ENCODE measurements at regions of chr1 and their contacts with region 1.

Region 1: GRCh38 chr1:161132410-161133219 is at the start of gene DEDD:
- DNase-seq: peak; percentile 89
- H3K4me3 Mint-ChIP-seq: no peak within 1 kb of the TSS
- H3K27ac Mint-ChIP-seq: no peak within 1 kb of the TSS
- H3K4me1 Mint-ChIP-seq: peaks cover 35% of the 10 kb centered on the region
- H3K27me3 Mint-ChIP-seq: no peaks in the 10 kb centered on the region
- total RNA-seq, gene DEDD: 37.5 and 40.3 TPM in 2 replicates

Region 2: DNA sequence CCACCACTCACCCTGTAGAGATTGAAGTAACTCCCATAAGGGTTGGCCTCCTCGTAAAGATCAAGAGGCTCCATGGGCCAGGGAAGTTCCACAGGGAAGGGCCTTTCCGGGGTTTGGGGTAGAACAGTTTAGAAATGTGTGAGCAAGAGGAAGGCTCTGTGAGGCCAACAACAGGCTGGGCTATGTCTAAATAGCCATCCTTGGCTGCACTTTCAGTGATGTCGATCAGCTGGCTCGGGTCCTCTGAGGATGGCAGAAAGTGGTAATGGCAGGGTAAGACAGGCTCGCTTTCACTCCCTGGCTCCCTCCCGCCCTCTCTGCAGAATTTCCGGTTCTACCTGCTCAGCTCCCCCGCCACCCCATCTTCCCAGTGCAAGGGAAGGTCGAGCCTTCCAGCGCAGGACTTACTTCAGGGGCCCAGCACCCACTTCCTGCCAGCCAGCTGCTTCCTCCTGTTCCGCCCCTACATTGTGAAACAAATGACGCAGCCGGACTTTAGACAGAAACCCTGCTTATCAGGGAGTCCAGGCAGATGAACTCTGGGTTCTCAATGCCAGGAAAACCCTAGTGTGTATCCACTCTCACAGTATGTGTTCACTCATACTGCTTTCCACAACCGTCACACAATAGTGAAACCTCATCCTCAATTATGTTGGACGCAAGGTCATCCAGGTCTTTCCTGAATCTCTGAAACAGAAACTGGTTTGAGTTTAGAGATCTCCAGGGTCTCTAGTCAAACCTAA is 119.0 kb before region 1 on chr1:
- intact Hi-C with region 1: loop called (anchors 5 kb)
- DNase-seq: peak; percentile 62
- H3K4me3 Mint-ChIP-seq: peak overlapping the region; percentile 74
- H3K27ac Mint-ChIP-seq: peak overlapping the region; percentile 96
- H3K4me1 Mint-ChIP-seq: peaks cover 37% of the 10 kb centered on the region
- H3K27me3 Mint-ChIP-seq: no peaks in the 10 kb centered on the region

Region 3: DNA sequence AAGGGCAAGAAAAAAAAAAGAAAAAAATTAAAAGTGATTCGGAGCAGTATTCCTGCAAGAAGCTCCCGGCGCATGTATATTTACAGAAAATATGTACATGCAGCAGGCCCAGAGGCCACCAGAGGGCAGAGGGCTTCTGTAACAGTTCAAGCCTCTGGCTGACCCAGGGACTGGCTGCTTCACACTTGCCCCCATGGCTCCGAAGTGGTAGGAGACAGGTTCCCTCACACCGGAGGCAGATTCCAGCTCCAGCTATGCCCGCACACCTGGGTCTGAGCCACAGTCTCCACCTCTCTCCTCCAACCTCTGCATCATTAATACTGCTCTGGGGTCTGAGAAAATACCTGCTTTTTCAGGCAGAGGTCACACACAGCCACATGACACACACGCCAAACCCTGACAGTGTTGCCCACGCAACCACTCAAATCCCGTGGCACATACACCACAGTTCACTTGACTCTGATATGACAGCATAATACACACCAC is 60.7 kb before region 1 on chr1:
- intact Hi-C with region 1: loop called (anchors 5 kb)
- DNase-seq: no peak
- H3K4me3 Mint-ChIP-seq: no peak overlapping the region
- H3K27ac Mint-ChIP-seq: no peak overlapping the region
- H3K4me1 Mint-ChIP-seq: peaks cover 29% of the 10 kb centered on the region
- H3K27me3 Mint-ChIP-seq: no peaks in the 10 kb centered on the region

Region 4: DNA sequence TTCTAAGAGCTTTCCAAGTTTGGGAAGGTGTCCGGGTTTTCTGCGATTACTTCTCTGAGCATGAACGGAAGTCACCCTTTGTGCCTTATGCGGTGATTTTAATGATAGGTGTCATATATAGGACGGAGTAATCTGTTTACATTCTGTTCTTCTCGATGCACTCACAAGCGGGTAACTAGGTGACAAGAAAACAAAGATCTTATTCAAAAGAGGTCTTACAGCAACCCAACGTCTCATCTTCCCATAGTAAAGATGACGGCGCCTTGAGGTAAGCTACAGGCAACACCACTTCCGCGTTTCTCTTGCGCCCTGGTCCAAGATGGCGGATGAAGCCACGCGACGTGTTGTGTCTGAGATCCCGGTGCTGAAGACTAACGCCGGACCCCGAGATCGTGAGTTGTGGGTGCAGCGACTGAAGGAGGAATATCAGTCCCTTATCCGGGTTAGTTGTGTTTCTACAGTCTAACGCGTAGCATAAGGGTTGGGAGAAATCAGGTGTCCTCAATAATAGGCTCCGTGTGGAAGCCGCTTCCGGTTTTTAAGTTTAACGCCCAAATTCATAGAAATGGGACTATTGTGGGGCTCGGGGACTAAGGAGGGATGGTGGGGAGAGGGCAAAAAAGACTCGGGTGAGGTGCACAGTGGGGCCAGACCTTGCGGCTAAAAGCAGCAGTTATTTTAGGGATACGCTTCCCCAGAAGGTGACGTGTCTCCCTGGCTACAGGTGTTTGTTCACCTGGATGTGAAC is 21.2 kb after region 1 on chr1 and contains the start of gene UFC1:
- intact Hi-C with region 1: loop called (anchors 1 kb)
- DNase-seq: peak; percentile 82
- H3K4me3 Mint-ChIP-seq: peak within 1 kb of the TSS; percentile 100
- H3K27ac Mint-ChIP-seq: peak within 1 kb of the TSS; percentile 100
- H3K4me1 Mint-ChIP-seq: peaks cover 22% of the 10 kb centered on the region
- H3K27me3 Mint-ChIP-seq: no peaks in the 10 kb centered on the region
- total RNA-seq, gene UFC1: 91.5 and 91.8 TPM in 2 replicates

Region 5: GRCh38 chr1:161177112-161177935 is 44.7 kb after region 1 on chr1 and contains the start of gene B4GALT3:
- intact Hi-C with region 1: loop called (anchors 2 kb)
- DNase-seq: peak; percentile 92
- H3K4me3 Mint-ChIP-seq: peak within 1 kb of the TSS; percentile 99
- H3K27ac Mint-ChIP-seq: peak within 1 kb of the TSS; percentile 97
- H3K4me1 Mint-ChIP-seq: peaks cover 48% of the 10 kb centered on the region
- H3K27me3 Mint-ChIP-seq: no peaks in the 10 kb centered on the region
- total RNA-seq, gene B4GALT3: 57.5 and 57.6 TPM in 2 replicates

Region 6: DNA sequence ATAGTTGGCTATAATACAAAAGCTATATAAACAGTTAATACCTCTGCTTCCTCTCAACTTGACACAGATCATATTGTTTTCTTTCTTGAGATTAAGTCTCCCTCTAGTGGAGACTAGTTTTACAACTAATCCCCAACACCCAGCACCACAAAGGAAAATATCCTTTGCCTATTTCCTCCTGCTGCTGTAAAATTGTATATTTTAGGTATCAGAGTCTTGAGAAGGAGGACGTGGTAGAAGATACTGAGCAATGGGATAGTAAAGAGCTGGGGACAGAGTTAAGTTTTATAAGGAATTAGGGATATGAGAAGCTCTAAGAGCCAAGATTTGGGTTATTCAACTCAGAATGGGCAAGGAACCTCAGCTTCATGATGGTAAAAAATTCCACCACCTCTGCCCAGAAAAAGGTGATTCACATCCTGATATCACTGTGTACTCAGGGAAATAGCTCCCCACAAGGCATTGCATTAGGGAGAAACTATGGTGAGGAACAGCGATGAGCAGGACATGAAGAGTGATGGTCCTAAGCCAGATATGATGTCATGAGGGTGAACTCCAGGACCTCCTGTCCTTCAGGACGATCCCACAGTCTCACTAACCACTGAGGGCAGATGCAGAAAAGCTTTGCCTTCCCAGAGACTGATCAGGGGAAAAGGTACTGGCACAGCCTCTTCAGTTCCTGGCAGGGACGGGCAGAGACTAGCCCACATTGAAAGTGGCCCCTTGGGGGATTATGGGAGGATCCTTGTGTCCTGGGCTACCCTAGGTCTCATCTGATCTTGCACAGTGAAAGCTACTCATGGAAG is 249.8 kb after region 1 on chr1:
- intact Hi-C with region 1: no loop called
- DNase-seq: no peak
- H3K4me3 Mint-ChIP-seq: no peak overlapping the region
- H3K27ac Mint-ChIP-seq: no peak overlapping the region
- H3K4me1 Mint-ChIP-seq: peaks cover 18% of the 10 kb centered on the region
- H3K27me3 Mint-ChIP-seq: no peaks in the 10 kb centered on the region

Measured in activated T-helper 2 cell treated with anti-CD3 and anti-CD28 coated beads, Interferon-gamma antibody, Interleukin-2, Interleukin-4, amounts not matched to agents 10 μg/mL and 5 μg/mL and 100 μg/mL, durations not matched to agents 14 hours and 24 hours and 36 hours (primary cell).